Activated CD4-positive, alpha-beta memory T cell treated with anti-CD3 and anti-CD28 coated beads for 36 hours (primary cell): ENCODE measurements at regions of chr9 and their contacts with region 1.

Region 1: GRCh38 chr9:31347082-31347617 is 1037.3 kb upstream of the ACO1 start:
- DNase-seq: peak; percentile 18
- H3K4me3 Mint-ChIP-seq: peak overlapping the region; percentile 69
- H3K27ac Mint-ChIP-seq: peak overlapping the region; percentile 97
- H3K4me1 Mint-ChIP-seq: peaks cover 38% of the 10 kb centered on the region
- H3K27me3 Mint-ChIP-seq: no peaks in the 10 kb centered on the region

Region 2: GRCh38 chr9:30075451-30076199 is 1271.5 kb before region 1 on chr9:
- CTCF ChIA-PET with region 1: no interaction called
- POLR2A ChIA-PET with region 1: no interaction called
- intact Hi-C with region 1: loop called (anchors 10 kb)
- DNase-seq: peak; percentile 64
- H3K4me3 Mint-ChIP-seq: no peak overlapping the region
- H3K27ac Mint-ChIP-seq: peak overlapping the region; percentile 42
- H3K4me1 Mint-ChIP-seq: peaks cover 19% of the 10 kb centered on the region
- H3K27me3 Mint-ChIP-seq: no peaks in the 10 kb centered on the region

Region 3: GRCh38 chr9:31243386-31243785 is 103.8 kb before region 1 on chr9:
- CTCF ChIA-PET with region 1: no interaction called
- POLR2A ChIA-PET with region 1: no interaction called
- intact Hi-C with region 1: no loop called
- DNase-seq: no peak
- H3K4me3 Mint-ChIP-seq: no peak overlapping the region
- H3K27ac Mint-ChIP-seq: no peak overlapping the region
- H3K4me1 Mint-ChIP-seq: no peaks in the 10 kb centered on the region
- H3K27me3 Mint-ChIP-seq: no peaks in the 10 kb centered on the region

Region 4: GRCh38 chr9:31272456-31273295 is 74.5 kb before region 1 on chr9:
- CTCF ChIA-PET with region 1: no interaction called
- POLR2A ChIA-PET with region 1: no interaction called
- intact Hi-C with region 1: loop called (anchors 2 kb)
- DNase-seq: peak; percentile 69
- H3K4me3 Mint-ChIP-seq: no peak overlapping the region
- H3K27ac Mint-ChIP-seq: no peak overlapping the region
- H3K4me1 Mint-ChIP-seq: peaks cover 10% of the 10 kb centered on the region
- H3K27me3 Mint-ChIP-seq: no peaks in the 10 kb centered on the region

Region 5: GRCh38 chr9:31335529-31336234 is 11.5 kb before region 1 on chr9:
- CTCF ChIA-PET with region 1: no interaction called
- POLR2A ChIA-PET with region 1: no interaction called
- intact Hi-C with region 1: loop called (anchors 1 kb)
- DNase-seq: no peak
- H3K4me3 Mint-ChIP-seq: no peak overlapping the region
- H3K27ac Mint-ChIP-seq: peak overlapping the region; percentile 40
- H3K4me1 Mint-ChIP-seq: peaks cover 20% of the 10 kb centered on the region
- H3K27me3 Mint-ChIP-seq: no peaks in the 10 kb centered on the region

Region 6: DNA sequence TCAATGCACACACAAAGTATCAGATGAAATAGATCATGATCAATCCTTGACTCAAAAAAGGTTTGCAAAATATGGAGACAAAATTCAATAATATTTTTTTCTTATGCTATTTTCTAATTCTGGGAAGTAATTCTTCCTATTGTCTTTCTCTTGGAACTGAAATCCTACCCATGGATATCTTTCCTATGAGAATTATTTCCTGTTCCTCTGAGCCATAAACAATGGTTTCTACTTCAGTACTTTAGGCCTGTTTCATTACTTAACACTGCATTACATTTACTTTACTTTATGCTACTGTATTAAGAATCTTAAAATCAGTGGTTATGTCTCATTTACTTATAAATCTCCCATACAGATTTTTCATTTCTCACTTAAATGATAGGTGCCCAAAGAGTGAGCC is 11.9 kb after region 1 on chr9:
- CTCF ChIA-PET with region 1: no interaction called
- POLR2A ChIA-PET with region 1: no interaction called
- intact Hi-C with region 1: no loop called
- DNase-seq: no peak
- H3K4me3 Mint-ChIP-seq: no peak overlapping the region
- H3K27ac Mint-ChIP-seq: no peak overlapping the region
- H3K4me1 Mint-ChIP-seq: no peaks in the 10 kb centered on the region
- H3K27me3 Mint-ChIP-seq: no peaks in the 10 kb centered on the region

Region 7: GRCh38 chr9:31542384-31543055 is 195.4 kb after region 1 on chr9:
- CTCF ChIA-PET with region 1: interaction called, 3 read pairs
- POLR2A ChIA-PET with region 1: no interaction called
- intact Hi-C with region 1: loop called (anchors 10 kb)
- DNase-seq: peak; percentile 52
- H3K4me3 Mint-ChIP-seq: peak overlapping the region; percentile 3
- H3K27ac Mint-ChIP-seq: no peak overlapping the region
- H3K4me1 Mint-ChIP-seq: peaks cover 18% of the 10 kb centered on the region
- H3K27me3 Mint-ChIP-seq: no peaks in the 10 kb centered on the region